ENCODE measurements at regions of chr17 and their contacts with region 1.

Region 1: GRCh38 chr17:31558748-31559644 is 167.5 kb downstream of the RAB11FIP4 start:
- DNase-seq: peak in 1 of 2 donors; percentile 88
- H3K4me3 ChIP-seq: peak overlapping the region; percentile 75 to 91
- H3K27ac ChIP-seq: peak overlapping the region; percentile 93 to 98
- H3K4me1 ChIP-seq: peaks cover 3 to 23% of the 10 kb centered on the region in 2 donors
- H3K27me3 ChIP-seq: no peaks in the 10 kb centered on the region
- CTCF ChIP-seq: peak; percentile 40 to 98 (median 62)

Region 2: DNA sequence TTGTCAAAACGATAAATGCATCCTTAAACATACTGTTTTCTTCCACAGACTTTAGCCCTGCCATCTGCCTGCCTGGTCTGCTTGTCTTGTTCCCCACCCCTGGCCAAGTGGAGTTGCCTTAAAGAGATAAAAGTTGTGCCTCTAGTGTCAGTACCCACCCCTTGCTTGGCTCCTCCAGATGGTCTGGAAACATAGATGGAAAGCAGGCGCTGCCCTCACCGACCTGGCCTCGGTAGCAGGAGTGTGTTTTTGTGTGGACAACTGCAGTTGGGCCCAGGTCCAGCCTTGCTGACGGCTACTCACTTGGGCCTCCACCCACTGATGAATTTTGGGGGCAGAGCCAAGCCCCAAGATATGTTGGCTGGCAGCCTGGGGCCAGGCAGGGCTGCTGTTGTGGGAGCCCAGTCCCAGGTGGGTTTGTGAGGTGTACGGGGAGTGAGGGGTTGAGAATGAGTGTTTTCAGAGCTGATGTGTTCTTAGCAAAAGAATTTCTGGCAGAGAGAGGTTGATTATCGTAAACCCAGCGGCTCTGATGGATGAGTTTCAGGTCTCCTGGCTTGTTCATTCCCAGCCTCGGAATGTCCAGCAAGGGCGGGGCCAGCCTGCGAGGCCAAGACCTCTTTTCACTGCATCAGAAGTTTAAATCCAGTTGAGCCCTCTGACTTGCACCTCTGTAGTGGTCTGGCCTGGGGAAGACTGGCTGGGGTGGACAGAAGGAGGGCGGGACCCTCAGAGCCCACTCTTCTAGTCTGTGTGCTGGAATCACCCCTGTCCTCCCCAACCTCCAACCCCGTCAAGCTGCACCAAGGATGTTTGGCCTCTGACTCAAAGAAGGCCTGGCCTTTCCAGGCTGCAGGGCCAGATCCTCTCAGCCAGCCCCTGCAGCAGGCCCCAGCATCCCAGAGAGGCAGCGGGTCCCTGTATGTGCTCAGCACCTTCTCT is 12.2 kb after region 1 on chr17:
- intact Hi-C with region 1: loop called (anchors 1 kb)
- DNase-seq: peak in 1 of 2 donors; percentile 92
- H3K4me3 ChIP-seq: no peak overlapping the region
- H3K27ac ChIP-seq: peak overlapping the region; percentile 83 to 91
- H3K4me1 ChIP-seq: peaks cover 16 to 63% of the 10 kb centered on the region in 2 donors
- H3K27me3 ChIP-seq: no peaks in the 10 kb centered on the region
- CTCF ChIP-seq: no peak

Region 3: GRCh38 chr17:31596382-31597323 is 37.7 kb after region 1 on chr17:
- intact Hi-C with region 1: loop called (anchors 2 kb)
- DNase-seq: peak; percentile 93 to 98
- H3K4me3 ChIP-seq: no peak overlapping the region
- H3K27ac ChIP-seq: peak overlapping the region; percentile 87 to 93
- H3K4me1 ChIP-seq: peaks cover 23 to 43% of the 10 kb centered on the region in 2 donors
- H3K27me3 ChIP-seq: no peaks in the 10 kb centered on the region
- CTCF ChIP-seq: peak in 1 of 3 experiments; percentile 20

Region 4: DNA sequence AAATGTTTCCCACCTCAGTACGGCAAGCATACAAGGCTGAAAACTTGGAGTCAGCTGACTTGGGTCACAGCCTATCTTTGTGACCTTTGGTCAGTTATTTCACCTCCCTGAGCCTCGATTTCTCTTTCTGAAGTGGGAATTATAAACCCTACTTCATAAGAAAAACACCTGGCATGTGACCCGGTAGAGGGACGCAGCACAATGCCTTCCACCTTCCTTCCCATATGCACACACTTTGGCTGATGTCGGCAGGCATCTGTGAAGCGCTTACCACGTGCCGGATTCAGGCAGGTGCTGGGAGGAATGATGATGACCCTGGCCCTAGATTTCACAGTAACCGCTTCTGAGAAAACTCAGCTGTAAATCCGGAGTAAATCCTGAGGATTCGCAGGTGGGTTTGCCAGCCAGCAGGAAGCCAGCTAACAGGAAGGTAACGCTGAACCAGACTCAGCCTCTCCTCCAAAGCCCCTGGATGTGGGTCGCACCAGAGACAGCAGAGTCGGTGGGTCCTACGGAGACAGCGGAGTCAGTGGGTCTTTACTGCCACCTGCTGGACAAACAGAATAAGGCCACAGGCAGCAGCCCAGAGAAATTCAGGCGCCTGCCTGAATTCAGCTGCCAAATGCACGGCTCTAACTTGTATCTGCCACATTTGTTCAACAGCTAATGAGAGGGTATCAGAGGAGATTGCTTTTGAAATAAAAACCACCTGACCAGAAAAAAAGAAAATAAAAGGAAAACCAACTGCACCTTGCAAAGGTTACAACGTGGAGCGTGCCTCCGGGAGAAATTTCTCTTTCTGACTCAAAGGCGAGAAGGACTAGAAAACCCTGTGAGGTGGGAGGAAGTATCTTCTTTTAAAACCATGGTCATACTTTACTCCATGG is 283.4 kb after region 1 on chr17:
- intact Hi-C with region 1: loop called (anchors 1 kb)
- DNase-seq: peak in 1 of 2 donors; percentile 85
- H3K4me3 ChIP-seq: peak overlapping the region in 1 of 2 donors; percentile 49
- H3K27ac ChIP-seq: peak overlapping the region; percentile 67 to 74
- H3K4me1 ChIP-seq: peaks cover 10 to 24% of the 10 kb centered on the region in 2 donors
- H3K27me3 ChIP-seq: no peaks in the 10 kb centered on the region
- CTCF ChIP-seq: peak; percentile 96 to 99 (median 96)

Region 5: GRCh38 chr17:31900877-31901276 is 341.9 kb after region 1 on chr17:
- intact Hi-C with region 1: loop called (anchors 1 kb)
- DNase-seq: no peak
- H3K4me3 ChIP-seq: peak overlapping the region; percentile 73 to 90
- H3K27ac ChIP-seq: peak overlapping the region; percentile 56 to 72
- H3K4me1 ChIP-seq: peaks cover 4 to 9% of the 10 kb centered on the region in 2 donors
- H3K27me3 ChIP-seq: no peaks in the 10 kb centered on the region
- CTCF ChIP-seq: no peak